MCF 10A (cell line): ENCODE measurements at regions of chr3 and their contacts with region 1.

Region 1: DNA sequence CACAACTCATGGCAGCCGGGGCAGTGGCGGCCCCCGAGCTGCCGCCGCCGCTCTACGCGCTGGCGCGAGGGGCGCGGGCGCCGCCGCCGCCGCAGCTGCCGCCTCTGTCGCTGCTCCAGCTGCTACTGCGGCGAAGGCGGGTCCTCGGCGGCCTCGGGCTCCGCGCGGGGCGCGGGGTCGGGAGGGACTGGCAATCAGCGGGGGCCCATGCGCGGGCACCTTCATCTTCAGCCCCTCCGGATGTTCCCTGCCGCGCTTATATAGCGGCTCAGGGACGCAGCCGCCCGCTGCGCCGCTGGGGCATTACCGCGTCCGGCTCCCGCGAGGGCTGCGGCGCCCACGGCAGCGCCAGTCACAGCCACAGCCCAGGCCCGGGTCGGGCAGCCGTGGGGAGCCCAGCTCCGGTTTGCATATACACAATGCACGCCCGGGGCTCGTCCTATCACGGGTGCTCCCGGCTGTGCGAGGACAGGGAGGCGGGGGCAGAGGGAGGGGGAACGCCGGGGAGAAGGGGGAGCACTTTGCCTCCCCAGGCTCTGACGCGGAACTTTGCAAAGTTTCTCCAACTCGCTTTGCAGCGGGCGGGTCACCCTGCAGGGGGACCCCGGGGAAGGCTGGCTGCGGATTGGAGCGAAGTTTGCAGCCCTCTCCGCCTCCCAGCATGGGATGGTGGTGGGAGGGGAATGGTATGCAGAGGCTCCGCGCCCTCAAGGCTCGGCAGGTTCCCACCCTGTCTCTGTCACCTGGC is at the start of gene VGLL3:
- DNase-seq: peak; percentile 80
- H3K4me3 Mint-ChIP-seq: peak within 1 kb of the TSS; percentile 82
- H3K27ac Mint-ChIP-seq: peak within 1 kb of the TSS; percentile 87
- H3K4me1 Mint-ChIP-seq: peaks cover 32% of the 10 kb centered on the region
- H3K27me3 Mint-ChIP-seq: no peaks in the 10 kb centered on the region
- CTCF ChIP-seq: no peak
- total RNA-seq, gene VGLL3: 6.3 and 12.2 TPM in 2 replicates

Region 2: DNA sequence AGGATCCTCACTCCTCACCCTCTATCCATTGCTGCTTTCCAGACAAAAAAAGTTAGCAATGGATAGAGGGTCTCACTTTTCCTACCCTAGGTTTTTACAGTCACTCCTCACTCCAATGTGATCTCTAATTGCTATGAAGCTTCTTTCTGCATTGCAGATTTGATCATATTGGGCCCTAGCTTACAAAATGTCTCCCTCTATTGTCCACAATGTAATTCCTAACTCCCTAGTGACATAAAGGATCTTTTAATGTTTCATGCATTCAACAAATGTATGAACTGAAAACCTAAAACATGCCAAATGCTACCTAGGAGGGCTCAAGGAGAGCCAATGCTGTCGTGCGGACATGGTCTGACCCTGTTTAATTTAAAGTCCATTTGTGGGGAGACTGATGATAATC is 1797.3 kb before region 1 on chr3:
- CTCF ChIA-PET with region 1: no interaction called
- POLR2A ChIA-PET with region 1: no interaction called
- intact Hi-C with region 1: no loop called
- DNase-seq: peak; percentile 1
- H3K4me3 Mint-ChIP-seq: no peak overlapping the region
- H3K27ac Mint-ChIP-seq: no peak overlapping the region
- H3K4me1 Mint-ChIP-seq: no peaks in the 10 kb centered on the region
- H3K27me3 Mint-ChIP-seq: peaks cover 62% of the 10 kb centered on the region
- CTCF ChIP-seq: peak; percentile 19

Region 3: DNA sequence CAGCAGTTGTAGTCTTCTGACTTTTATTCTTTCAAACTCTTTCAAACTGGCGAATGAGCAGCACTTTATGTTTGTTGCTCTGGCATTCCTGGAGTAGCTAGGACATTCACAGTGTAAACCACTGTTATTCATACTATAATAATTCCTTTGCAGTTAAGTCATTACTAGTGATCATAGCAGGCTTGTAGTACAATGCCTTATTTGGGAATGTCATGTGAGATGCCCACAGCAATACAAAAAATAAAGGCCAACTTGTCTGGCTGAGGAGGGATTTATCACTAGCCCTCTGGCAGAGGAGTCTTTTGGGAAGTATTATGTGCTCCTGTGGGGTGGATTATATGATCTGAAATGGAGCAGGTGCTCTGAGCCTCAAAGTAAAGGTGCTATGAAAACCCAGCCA is 197.1 kb before region 1 on chr3:
- CTCF ChIA-PET with region 1: interaction called, 6 read pairs
- POLR2A ChIA-PET with region 1: interaction called, 20 read pairs
- intact Hi-C with region 1: loop called (anchors 5 kb)
- DNase-seq: peak; percentile 75
- H3K4me3 Mint-ChIP-seq: peak overlapping the region; percentile 49
- H3K27ac Mint-ChIP-seq: peak overlapping the region; percentile 98
- H3K4me1 Mint-ChIP-seq: peaks cover 22% of the 10 kb centered on the region
- H3K27me3 Mint-ChIP-seq: no peaks in the 10 kb centered on the region
- CTCF ChIP-seq: no peak

Region 4: DNA sequence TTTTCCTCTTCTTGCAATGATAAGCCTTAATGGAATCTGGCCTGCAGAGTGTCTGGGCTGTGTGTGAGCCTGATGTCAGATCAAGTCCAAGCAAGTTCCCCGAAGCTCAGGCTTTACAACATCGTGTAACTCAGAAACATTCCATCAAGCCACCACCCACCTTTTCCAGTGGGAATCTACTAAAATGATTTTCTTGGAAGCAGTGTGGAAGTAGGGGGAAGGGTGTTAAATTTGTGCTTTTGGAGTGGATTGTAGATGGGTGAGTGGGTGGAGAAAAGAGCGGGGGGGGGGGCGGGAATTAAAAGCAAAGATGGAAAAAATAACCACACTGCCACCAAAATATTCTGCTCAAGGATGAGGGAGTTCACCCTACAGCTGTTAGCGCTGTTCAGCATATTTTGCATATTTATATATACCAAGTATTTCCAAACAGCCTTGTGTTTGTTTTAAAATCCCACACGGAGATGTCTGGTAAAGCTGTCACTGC is 53.6 kb before region 1 on chr3:
- CTCF ChIA-PET with region 1: interaction called, 4 read pairs
- POLR2A ChIA-PET with region 1: interaction called, 32 read pairs
- intact Hi-C with region 1: no loop called
- DNase-seq: peak; percentile 72
- H3K4me3 Mint-ChIP-seq: peak overlapping the region; percentile 25
- H3K27ac Mint-ChIP-seq: peak overlapping the region; percentile 96
- H3K4me1 Mint-ChIP-seq: peaks cover 15% of the 10 kb centered on the region
- H3K27me3 Mint-ChIP-seq: no peaks in the 10 kb centered on the region
- CTCF ChIP-seq: no peak

Region 5: DNA sequence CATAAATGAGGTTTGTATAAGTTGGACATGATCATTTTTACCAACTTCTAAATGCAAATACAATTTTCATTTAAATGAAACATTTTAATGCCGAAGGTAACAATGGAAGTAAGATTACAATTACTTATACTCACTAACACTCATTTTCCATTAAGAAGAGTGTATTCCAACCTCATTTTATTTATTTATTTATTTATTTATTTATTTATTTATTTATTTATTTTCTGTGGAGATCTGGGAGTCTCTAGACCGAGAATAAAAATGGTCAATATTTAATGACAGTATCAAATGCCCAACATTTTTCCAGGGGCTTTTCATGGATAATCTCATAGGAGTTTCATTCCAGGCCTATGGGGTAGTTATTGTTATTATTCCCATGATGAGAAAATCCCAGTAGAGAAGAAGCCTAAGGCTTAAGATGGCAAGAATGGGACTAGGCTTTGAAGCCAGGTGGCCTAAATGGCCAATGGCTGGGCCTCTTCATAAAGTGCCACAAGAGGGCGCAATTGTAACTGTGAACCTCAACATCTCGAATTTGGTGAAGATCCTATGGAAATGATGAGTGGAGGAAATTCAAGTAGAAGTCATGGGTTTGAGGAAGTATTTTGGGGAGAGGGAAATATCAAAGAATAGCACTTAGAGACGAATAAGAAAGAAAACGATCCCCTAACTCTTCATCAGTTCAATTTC is 21.3 kb before region 1 on chr3:
- CTCF ChIA-PET with region 1: interaction called, 4 read pairs
- POLR2A ChIA-PET with region 1: interaction called, 24 read pairs
- intact Hi-C with region 1: loop called (anchors 2 kb)
- DNase-seq: peak; percentile 79
- H3K4me3 Mint-ChIP-seq: no peak overlapping the region
- H3K27ac Mint-ChIP-seq: no peak overlapping the region
- H3K4me1 Mint-ChIP-seq: peaks cover 18% of the 10 kb centered on the region
- H3K27me3 Mint-ChIP-seq: no peaks in the 10 kb centered on the region
- CTCF ChIP-seq: peak; percentile 72

Region 6: DNA sequence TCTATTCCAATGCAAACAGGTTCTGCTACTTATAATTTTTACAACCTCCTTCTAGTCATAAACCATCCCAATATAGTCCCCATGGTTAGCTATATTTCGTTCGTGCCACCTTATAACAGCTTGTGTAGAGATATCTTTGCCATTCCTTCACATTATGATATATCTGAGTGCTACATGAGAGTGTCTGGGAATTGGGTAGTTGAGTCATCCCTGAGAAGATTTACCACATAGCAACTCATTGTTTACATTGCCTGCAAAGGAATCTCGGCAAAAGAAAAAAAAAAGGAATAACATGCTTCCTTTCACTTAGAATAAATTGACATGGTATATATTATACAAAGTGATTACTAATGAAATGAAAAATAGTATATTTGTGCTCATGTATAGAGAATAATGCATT is 86.0 kb after region 1 on chr3:
- CTCF ChIA-PET with region 1: interaction called, 5 read pairs
- POLR2A ChIA-PET with region 1: interaction called, 12 read pairs
- intact Hi-C with region 1: loop called (anchors 5 kb)
- DNase-seq: peak; percentile 77
- H3K4me3 Mint-ChIP-seq: no peak overlapping the region
- H3K27ac Mint-ChIP-seq: peak overlapping the region; percentile 61
- H3K4me1 Mint-ChIP-seq: peaks cover 10% of the 10 kb centered on the region
- H3K27me3 Mint-ChIP-seq: no peaks in the 10 kb centered on the region
- CTCF ChIP-seq: no peak

Region 7: GRCh38 chr3:87626546-87626945 is 635.6 kb after region 1 on chr3:
- CTCF ChIA-PET with region 1: no interaction called
- POLR2A ChIA-PET with region 1: no interaction called
- intact Hi-C with region 1: no loop called
- DNase-seq: no peak
- H3K4me3 Mint-ChIP-seq: no peak overlapping the region
- H3K27ac Mint-ChIP-seq: no peak overlapping the region
- H3K4me1 Mint-ChIP-seq: no peaks in the 10 kb centered on the region
- H3K27me3 Mint-ChIP-seq: no peaks in the 10 kb centered on the region
- CTCF ChIP-seq: no peak